Activated CD4-positive, alpha-beta T cell treated with anti-CD3 and anti-CD28 coated beads, Interleukin-2, amount 10 ng/mL, durations not matched to agents 24 days and 14 days (primary cell): ENCODE measurements at regions of chr2 and their contacts with region 1.

Region 1: DNA sequence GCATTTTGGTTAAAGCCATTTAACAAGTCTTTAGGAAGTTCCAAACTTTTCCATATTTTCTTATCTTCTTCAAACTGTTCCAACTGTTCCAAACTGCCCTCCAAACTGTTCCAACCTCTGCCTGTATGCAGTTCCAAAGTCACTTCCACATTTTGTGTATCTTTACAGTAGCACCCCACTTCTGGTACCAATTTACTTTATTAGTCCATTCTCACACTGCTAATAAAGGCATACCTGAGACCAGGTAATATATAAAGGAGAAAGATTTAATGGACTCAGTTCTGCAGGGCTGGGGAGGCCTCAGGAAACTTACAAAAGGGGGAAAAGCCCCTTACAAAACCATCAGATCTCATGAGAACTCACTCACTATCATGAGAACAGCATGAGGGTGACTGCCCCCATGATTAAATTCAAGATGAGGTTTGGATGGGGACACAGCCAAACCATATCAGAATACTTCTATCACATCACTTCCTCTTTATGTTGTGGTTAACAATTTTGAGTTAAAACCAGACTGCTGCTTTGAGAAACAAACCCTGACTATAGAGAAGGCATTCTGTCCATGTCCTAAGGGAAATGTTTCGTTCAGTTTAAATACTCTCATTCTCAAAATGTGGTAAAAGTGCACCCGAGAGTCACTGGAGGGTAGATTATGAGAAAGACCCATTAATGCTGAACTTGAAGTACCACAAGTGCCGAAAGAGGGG is 11.0 kb downstream of the IL18R1 start:
- DNase-seq: peak; percentile 64
- H3K4me3 Mint-ChIP-seq: peak overlapping the region; percentile 73
- H3K27ac Mint-ChIP-seq: peak overlapping the region; percentile 91
- H3K4me1 Mint-ChIP-seq: peaks cover 77% of the 10 kb centered on the region
- H3K27me3 Mint-ChIP-seq: no peaks in the 10 kb centered on the region

Region 2: GRCh38 chr2:102005989-102006885 is 360.3 kb before region 1 on chr2:
- intact Hi-C with region 1: loop called (anchors 5 kb)
- DNase-seq: peak; percentile 78
- H3K4me3 Mint-ChIP-seq: no peak overlapping the region
- H3K27ac Mint-ChIP-seq: no peak overlapping the region
- H3K4me1 Mint-ChIP-seq: peaks cover 10% of the 10 kb centered on the region
- H3K27me3 Mint-ChIP-seq: peaks cover 7% of the 10 kb centered on the region

Region 3: DNA sequence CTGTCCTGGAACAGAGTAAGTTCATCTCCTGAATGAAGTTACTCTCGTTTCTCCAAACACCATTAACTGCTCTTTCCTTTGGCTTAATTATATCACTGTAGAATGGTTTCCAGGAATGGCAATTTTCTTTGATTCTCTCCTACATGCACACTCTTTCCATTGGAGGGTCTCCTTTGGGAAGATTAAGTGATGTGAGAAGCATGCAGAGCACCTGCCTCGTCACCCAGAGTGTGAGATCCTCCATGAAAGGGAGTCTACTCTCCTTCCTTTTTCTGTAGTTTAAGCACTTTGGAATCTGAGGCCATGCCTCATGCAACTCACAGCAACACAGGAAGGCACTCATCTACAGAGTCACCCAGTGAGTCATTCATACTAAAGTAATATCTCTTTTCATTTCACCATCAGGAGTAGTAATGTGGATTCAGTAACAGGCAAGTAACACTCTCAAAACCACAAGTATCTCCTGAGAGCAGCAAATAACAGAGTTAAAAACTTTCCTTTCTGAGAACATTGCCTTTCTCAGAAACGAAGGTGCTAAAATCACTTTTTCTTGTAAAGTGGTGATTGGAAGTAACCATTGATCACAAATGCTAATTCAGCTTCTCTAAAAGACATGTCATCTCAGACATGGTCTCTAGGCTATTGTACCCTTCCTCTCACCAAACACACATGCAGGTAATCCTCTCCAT is 108.0 kb before region 1 on chr2:
- intact Hi-C with region 1: loop called (anchors 1 kb)
- DNase-seq: peak; percentile 82
- H3K4me3 Mint-ChIP-seq: peak overlapping the region; percentile 62
- H3K27ac Mint-ChIP-seq: peak overlapping the region; percentile 99
- H3K4me1 Mint-ChIP-seq: peaks cover 43% of the 10 kb centered on the region
- H3K27me3 Mint-ChIP-seq: no peaks in the 10 kb centered on the region

Region 4: GRCh38 chr2:102355526-102356380 is 10.8 kb before region 1 on chr2 and contains the start of gene IL18R1:
- intact Hi-C with region 1: loop called (anchors 1 kb)
- DNase-seq: peak; percentile 92
- H3K4me3 Mint-ChIP-seq: peak within 1 kb of the TSS; percentile 99
- H3K27ac Mint-ChIP-seq: peak within 1 kb of the TSS; percentile 99
- H3K4me1 Mint-ChIP-seq: peaks cover 39% of the 10 kb centered on the region
- H3K27me3 Mint-ChIP-seq: no peaks in the 10 kb centered on the region
- total RNA-seq, gene IL18R1: 41.7 and 50.2 TPM in 2 replicates

Region 5: DNA sequence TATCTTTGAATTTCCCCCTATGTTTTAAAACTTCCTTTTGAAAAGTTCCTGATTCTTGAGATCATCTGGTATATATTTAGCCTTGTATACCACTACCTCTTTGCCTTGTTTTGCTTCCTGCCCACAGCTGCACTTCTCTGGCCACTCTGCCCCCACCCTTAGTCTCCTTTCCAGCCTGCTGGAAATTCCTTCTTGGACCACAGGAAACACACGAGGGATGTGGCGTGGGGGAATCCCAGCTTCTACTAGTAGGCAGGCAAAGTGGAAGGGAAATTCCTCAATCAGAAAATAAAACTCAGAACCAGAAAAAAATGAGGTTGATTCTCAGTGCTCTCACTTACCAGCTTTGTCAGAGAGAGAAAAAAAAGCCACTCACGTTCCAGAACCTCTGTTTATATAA is 69.8 kb after region 1 on chr2:
- intact Hi-C with region 1: loop called (anchors 1 kb)
- DNase-seq: no peak
- H3K4me3 Mint-ChIP-seq: peak overlapping the region; percentile 43
- H3K27ac Mint-ChIP-seq: peak overlapping the region; percentile 87
- H3K4me1 Mint-ChIP-seq: peaks cover 33% of the 10 kb centered on the region
- H3K27me3 Mint-ChIP-seq: no peaks in the 10 kb centered on the region

Region 6: DNA sequence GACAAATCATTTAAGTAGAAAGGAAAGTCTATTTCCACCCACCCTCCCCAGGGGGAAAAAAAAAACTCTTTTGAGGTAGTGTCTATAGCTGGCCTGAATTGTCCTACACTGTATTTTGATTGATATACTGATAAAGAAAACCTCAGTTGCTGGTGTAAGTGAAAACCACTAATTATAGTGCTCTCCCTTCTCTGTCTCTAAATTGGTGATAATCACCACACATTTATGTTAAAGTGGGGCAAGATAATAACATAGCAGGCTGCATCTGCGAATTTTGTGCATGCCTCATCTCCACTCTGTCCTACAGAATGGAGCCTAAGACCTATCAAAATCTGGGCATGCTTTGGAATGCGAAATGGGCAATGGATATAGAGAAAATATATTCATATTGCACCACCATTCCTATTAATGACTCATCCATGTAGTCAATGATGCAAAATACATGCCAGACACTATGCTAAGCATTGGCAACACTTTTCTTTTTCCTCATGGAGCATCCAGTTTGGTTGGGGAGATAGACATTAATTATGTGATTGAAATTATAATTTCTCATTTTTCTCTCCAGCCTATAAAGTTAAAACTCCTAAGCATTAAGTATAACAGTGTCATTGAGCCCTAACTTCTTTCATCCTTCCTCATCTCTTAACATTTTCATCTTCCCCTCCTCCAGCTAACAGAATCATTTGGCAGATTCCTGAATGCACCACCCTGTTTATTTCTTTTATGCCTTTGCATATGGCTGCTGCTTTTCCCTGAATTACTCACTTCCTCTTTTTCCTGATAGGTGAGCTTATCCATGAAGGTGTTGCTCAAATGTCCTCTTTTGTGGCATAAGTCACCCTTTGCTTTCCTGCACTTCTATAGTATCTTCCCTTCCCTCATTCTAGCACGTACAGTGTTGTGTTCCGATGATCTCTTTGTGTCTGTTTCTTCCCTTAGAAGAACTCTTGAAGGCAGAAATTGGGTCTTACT is 311.0 kb after region 1 on chr2:
- intact Hi-C with region 1: no loop called
- DNase-seq: no peak
- H3K4me3 Mint-ChIP-seq: no peak overlapping the region
- H3K27ac Mint-ChIP-seq: no peak overlapping the region
- H3K4me1 Mint-ChIP-seq: no peaks in the 10 kb centered on the region
- H3K27me3 Mint-ChIP-seq: peaks cover 12% of the 10 kb centered on the region